ENCODE measurements at regions of chr20 and their contacts with region 1.

Region 1: GRCh38 chr20:63009045-63009961 is 2.5 kb upstream of the BHLHE23 start:
- DNase-seq: peak; percentile 96
- H3K27ac ChIP-seq: no peak overlapping the region
- CTCF ChIP-seq: peak; percentile 98

Region 2: DNA sequence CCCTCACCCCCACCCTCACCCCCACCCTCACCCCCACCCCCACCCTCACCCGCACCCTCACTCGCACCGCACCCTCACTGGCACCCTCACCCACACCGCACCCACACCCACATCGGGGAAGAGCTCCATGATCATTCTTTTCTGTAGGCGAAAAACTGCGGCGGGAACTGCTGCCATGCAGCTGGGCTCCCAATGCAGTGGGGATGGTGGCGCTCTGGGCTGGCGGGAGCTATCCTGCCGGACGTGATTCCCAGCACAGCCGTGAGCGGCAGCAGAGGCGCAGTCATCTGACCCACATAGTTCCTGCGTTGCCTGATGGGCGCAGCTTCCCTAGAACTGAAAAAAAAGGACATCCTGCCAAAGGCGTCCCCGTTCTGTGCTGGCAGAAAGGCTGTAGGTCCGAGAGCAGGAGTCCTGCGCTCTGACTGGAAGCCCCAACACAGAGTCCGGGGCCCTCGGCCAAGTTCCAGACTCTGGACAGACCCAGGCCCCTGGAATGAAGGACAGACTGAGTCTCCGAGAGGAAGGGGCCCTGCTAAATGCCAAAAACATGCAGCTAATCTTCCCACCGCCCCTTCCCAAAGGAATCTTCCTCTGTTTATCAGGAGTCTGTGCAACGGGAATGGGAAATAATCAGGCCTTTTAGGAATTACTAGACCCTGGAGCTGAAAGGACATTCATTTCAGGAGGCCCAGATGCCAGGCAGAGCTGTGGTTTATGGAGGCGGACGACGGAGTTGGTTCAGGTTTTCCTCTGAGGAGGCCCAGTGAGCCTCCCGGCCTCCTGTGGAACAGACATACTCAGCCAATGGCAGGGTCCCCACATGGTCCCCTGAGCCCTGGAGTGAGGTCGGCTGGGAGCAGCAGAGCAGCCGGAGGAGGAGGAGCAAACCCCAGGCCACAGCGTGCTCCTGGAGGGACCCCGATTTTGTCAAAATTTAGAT is 133.6 kb before region 1 on chr20:
- CTCF ChIA-PET with region 1: interaction called, 26 read pairs
- POLR2A ChIA-PET with region 1: no interaction called
- DNase-seq: peak; percentile 81
- H3K27ac ChIP-seq: peak overlapping the region; percentile 80
- CTCF ChIP-seq: peak; percentile 66

Region 3: GRCh38 chr20:62964700-62965099 is 44.6 kb before region 1 on chr20:
- CTCF ChIA-PET with region 1: interaction called, 19 read pairs
- POLR2A ChIA-PET with region 1: no interaction called
- DNase-seq: no peak
- H3K27ac ChIP-seq: no peak overlapping the region
- CTCF ChIP-seq: no peak

Region 4: DNA sequence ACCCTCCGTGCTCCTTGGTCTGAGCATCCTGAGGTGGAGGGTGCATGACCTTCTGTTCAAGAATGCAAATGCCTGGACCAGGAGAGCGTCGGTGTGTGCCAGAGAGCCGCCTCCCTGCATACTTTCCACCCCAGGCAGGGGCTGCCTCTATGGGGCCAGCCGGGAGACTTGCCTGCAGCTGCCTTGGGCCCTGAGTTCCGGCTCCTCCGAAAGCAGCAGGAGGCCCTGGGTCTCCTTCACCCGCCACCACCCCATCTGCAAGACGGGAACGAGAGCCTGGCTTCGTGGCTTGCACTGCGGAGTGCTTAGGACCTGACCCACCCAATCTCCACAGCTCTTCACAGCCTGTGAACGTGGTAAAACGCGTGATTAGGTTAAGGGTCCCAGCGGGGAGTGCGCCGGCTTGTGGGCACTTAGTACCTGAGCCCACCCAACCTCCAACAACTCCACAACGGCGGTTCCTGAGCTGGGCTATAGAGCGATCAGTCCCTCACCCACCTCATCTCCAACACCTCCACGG is 18.9 kb before region 1 on chr20:
- CTCF ChIA-PET with region 1: interaction called, 10 read pairs
- POLR2A ChIA-PET with region 1: no interaction called
- DNase-seq: no peak
- H3K27ac ChIP-seq: no peak overlapping the region
- CTCF ChIP-seq: no peak

Measured in RWPE1 (cell line).